Ascending aorta (tissue), 2 donors: ENCODE measurements at regions of chr12 and their contacts with region 1.

Region 1: DNA sequence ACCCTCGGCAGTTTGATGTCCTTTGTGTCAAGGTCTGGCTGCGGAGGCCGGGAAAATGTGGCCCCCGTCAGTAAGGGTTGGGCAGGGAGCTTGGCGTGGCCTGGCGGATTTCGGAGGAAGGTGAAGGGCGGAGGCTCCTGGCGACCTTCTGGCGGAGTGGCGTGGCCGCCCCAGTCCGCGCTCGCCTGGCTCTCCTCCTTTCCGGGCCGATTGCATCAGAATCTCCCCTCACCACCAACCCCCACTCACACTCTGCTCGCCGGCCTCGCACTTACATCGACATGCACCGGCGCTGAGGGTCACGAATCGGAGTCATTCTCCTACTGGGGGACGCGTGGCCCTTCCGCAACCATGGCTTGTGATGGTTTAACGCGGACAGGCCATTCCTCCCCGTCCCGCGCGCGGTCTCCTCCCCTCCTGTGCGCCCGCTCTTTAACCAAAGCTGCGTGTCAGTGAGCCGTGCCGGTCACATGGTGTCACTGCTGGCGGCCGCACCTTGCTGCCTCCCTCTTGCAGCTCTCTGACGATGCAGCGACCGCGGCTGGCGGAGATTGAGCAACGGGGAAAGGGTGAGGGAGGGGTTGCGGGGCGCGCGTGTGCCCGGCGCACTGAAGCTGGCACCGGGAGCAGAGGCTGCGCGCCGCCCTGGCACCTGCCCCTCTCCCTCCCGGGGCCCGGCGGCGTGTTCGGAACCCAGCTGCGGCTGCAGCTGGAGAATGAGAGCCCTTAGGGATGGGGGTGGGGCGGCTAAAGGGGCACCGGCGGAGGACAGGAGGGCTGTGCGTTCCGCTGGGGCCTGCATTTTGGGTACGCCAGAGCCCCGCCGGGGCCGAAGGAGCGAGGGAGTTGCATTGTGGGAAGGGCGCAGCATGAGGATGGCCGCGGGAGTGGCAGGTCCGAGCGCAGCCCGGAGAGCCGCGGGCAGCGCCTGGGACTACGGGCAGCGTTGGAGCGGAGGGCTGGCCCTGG is at the start of gene SLC38A1:
- DNase-seq: peak; percentile 75 to 91
- H3K4me3 ChIP-seq: peak within 1 kb of the TSS; percentile 65 to 77
- H3K27ac ChIP-seq: peak within 1 kb of the TSS; percentile 78 to 86
- H3K4me1 ChIP-seq: peaks cover 0 to 15% of the 10 kb centered on the region in 2 donors
- H3K27me3 ChIP-seq: no peaks in the 10 kb centered on the region
- CTCF ChIP-seq: no peak
- total RNA-seq, gene SLC38A1: 12.8 TPM

Region 2: DNA sequence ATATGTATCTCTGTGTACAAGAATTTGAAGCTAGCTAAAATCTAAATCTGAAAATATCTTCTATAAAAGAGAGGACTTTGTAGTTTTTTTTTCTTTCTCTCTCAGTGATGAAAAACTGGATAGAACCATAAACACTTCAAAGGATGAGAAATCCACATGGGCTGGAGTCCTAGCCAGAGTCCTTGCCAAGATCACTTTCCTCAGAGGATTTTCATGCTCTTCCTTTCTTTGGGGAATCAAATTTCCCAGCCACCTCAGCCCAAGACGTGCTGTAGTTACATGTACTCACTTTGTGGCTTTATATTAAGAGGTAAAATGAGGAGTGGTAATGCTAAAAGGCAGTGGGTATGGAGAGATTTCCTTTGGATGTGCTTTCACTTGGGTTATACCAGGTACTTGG is 110.4 kb before region 1 on chr12:
- intact Hi-C with region 1: loop called (anchors 5 kb)
- DNase-seq: no peak
- H3K4me3 ChIP-seq: no peak overlapping the region
- H3K27ac ChIP-seq: peak overlapping the region in 1 of 2 donors; percentile 59
- H3K4me1 ChIP-seq: peaks cover 3 to 19% of the 10 kb centered on the region in 2 donors
- H3K27me3 ChIP-seq: no peaks in the 10 kb centered on the region
- CTCF ChIP-seq: no peak

Region 3: DNA sequence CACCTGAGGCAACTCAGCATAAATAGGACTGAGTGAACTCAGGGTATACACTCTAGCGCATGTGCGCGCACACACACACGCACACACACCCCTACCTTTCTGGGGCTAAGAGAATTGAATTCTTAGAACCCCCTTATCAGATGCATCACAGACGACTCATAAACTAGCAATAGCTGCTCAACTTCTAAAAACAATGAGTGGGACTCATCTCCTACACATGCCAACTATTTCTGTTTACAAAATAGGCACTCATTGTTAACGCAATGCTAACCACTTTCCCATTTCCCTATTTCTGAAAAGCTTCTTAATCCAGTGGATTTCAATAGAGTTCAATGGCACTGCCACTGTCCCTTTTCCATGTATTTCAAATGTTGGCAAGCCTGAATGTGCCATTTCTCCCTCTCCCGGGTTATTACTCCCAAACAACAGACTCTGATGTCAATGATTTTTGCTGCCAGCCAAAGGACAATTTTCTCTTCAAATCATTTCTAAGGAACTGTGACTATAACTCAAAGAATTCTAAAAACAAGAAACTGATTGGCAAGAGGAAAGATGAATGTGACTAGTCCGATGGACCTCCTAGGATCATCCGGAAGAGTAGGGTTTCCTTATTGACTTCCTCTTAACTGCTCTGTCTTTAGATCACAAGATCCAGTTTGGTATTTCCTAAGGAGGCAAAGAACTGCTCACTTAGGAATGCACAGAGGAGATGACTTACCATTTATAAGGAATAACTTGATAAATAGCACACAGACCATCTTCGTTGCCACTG is 48.8 kb before region 1 on chr12:
- intact Hi-C with region 1: loop called (anchors 5 kb)
- DNase-seq: no peak
- H3K4me3 ChIP-seq: peak overlapping the region in 1 of 2 donors; percentile 14
- H3K27ac ChIP-seq: peak overlapping the region in 1 of 2 donors; percentile 64
- H3K4me1 ChIP-seq: peaks cover 23 to 26% of the 10 kb centered on the region in 2 donors
- H3K27me3 ChIP-seq: no peaks in the 10 kb centered on the region
- CTCF ChIP-seq: no peak

Region 4: DNA sequence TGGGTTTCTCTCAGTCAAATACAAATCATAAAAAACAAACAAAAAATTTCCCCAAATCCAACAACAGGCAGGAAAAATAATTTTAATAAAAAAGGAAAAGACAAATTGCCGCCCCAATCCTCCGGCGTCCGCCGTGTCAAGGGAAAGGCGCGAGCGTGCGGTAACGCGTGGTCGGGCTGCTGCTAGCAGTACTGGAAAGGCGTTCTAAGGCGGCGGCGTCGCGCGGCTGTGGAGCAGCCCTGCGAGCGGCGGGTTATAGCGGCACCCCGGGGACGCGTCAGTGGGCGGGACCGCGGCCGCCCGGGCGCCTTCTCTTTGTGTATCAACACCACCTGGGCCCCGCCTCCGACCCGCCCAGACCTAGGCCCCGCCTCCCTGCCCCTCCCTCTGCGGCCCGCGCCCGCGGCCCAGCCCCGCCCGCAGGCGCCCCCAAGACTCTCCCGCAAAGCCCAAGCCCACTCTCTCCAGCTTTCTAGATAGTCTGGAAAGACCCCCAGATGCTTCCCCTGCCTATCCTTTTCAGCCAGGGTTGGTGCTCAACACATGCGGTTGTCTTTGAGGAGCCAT is 103.8 kb after region 1 on chr12 and contains the start of gene SLC38A2:
- intact Hi-C with region 1: loop called (anchors 2 kb)
- DNase-seq: peak; percentile 90 to 99
- H3K4me3 ChIP-seq: peak within 1 kb of the TSS; percentile 94 to 98
- H3K27ac ChIP-seq: peak within 1 kb of the TSS; percentile 97 to 98
- H3K4me1 ChIP-seq: peaks cover 4 to 15% of the 10 kb centered on the region in 2 donors
- H3K27me3 ChIP-seq: no peaks in the 10 kb centered on the region
- CTCF ChIP-seq: no peak
- total RNA-seq, gene SLC38A2: 384 TPM

Region 5: DNA sequence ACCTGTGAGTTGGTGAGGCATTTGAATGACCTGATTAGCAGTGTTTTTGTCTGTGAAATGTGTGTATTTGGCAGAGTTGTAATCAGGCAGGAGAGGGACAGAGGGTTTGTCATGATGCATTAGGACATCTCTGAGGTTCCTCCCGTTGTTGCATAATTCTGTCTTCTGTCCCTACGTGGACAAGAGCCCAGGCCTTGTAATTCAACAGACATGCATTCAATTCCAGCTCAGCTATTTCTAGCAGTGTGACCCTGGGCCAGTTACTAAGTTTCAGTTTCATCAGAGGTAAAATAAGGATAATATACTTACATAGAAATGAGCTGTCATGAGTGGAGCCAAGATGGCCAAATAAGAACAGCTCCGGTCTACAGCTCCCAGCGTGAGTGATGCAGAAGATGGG is 348.3 kb after region 1 on chr12:
- intact Hi-C with region 1: no loop called
- DNase-seq: peak; percentile 12 to 80
- H3K4me3 ChIP-seq: no peak overlapping the region
- H3K27ac ChIP-seq: peak overlapping the region; percentile 28 to 50
- H3K4me1 ChIP-seq: peaks cover 0 to 7% of the 10 kb centered on the region in 2 donors
- H3K27me3 ChIP-seq: no peaks in the 10 kb centered on the region
- CTCF ChIP-seq: no peak